Caco-2 (cell line): ENCODE measurements at regions of chr16 and their contacts with region 1.

Region 1: GRCh38 chr16:31002250-31002700 is 8.2 kb downstream of the STX1B start:
- DNase-seq: no peak
- H3K4me3 ChIP-seq: no peak overlapping the region
- H3K4me3 Mint-ChIP-seq: no peak overlapping the region
- H3K27ac Mint-ChIP-seq: no peak overlapping the region
- H3K4me1 ChIP-seq: peaks cover 21% of the 10 kb centered on the region
- H3K4me1 Mint-ChIP-seq: peaks cover 12% of the 10 kb centered on the region
- H3K27me3 ChIP-seq: no peaks in the 10 kb centered on the region
- H3K27me3 Mint-ChIP-seq: no peaks in the 10 kb centered on the region
- CTCF ChIP-seq: no peak

Region 2: GRCh38 chr16:30728899-30729672 is 273.2 kb before region 1 on chr16:
- CTCF ChIA-PET with region 1: no interaction called
- POLR2A ChIA-PET with region 1: no interaction called
- intact Hi-C with region 1: no loop called
- DNase-seq: no peak
- H3K4me3 ChIP-seq: no peak overlapping the region
- H3K4me3 Mint-ChIP-seq: no peak overlapping the region
- H3K27ac Mint-ChIP-seq: no peak overlapping the region
- H3K4me1 ChIP-seq: no peaks in the 10 kb centered on the region
- H3K4me1 Mint-ChIP-seq: peaks cover 5% of the 10 kb centered on the region
- H3K27me3 ChIP-seq: no peaks in the 10 kb centered on the region
- H3K27me3 Mint-ChIP-seq: no peaks in the 10 kb centered on the region
- CTCF ChIP-seq: no peak

Region 3: DNA sequence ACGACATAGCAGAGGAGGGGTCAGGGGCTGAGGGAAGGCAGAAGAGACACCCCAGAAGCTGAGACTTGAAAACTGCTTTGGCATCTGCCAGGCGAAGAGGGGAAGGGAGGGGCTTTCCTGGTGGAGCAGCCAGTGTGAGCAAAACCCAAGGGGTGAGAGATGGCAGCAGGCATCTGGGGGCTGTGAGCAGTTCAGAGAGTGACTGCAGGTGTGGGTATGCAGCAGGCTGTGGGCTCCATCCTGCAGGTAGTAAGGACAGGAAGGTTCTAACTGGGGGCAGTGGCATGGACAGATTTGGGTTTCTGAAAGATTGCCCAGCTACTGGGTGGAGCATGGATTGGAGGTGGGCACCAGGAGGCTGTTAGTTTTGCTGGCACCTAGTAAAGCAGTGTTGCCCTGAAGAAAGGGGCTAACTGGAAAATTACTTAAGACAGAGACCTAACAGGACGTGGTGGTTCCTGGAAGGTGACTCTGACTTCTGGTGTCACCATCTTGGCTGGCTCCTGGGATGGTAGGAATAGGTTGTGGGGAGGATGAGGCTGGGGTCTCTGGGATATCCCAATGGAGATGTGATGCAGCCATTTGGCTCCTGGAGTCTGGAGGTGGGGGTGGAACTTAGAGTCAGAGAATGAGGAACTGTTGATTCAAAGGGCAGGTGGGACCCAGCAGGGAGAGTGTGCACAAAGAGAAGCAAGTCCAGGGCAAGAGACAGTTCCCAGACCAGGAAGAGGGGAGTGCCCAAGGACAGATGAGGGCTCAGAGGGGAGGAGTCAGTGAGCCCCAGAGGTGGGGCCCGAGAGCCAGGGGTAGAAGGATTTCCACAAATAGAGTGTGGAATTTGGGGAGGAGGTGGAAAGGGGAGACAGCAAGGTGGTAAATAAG is 119.6 kb before region 1 on chr16:
- CTCF ChIA-PET with region 1: no interaction called
- POLR2A ChIA-PET with region 1: no interaction called
- intact Hi-C with region 1: no loop called
- DNase-seq: no peak
- H3K4me3 ChIP-seq: no peak overlapping the region
- H3K4me3 Mint-ChIP-seq: no peak overlapping the region
- H3K27ac Mint-ChIP-seq: no peak overlapping the region
- H3K4me1 ChIP-seq: no peaks in the 10 kb centered on the region
- H3K4me1 Mint-ChIP-seq: peaks cover 15% of the 10 kb centered on the region
- H3K27me3 ChIP-seq: no peaks in the 10 kb centered on the region
- H3K27me3 Mint-ChIP-seq: no peaks in the 10 kb centered on the region
- CTCF ChIP-seq: no peak

Region 4: GRCh38 chr16:31344712-31345111 is 342.4 kb after region 1 on chr16:
- CTCF ChIA-PET with region 1: interaction called, 13 read pairs
- POLR2A ChIA-PET with region 1: no interaction called
- intact Hi-C with region 1: no loop called
- DNase-seq: no peak
- H3K4me3 ChIP-seq: no peak overlapping the region
- H3K4me3 Mint-ChIP-seq: no peak overlapping the region
- H3K27ac Mint-ChIP-seq: no peak overlapping the region
- H3K4me1 ChIP-seq: no peaks in the 10 kb centered on the region
- H3K4me1 Mint-ChIP-seq: no peaks in the 10 kb centered on the region
- H3K27me3 ChIP-seq: no peaks in the 10 kb centered on the region
- H3K27me3 Mint-ChIP-seq: no peaks in the 10 kb centered on the region
- CTCF ChIP-seq: no peak